HCT116 (cell line): ENCODE measurements at regions of chr7 and their contacts with region 1.

Region 1: GRCh38 chr7:64794171-64794844 is at the start of gene ZNF138:
- DNase-seq: peak; percentile 92
- ATAC-seq: peak; percentile 100
- H3K4me3 ChIP-seq: peak within 1 kb of the TSS; percentile 77 to 95
- H3K27ac ChIP-seq: peak within 1 kb of the TSS; percentile 70
- H3K4me1 ChIP-seq: peaks cover 5 to 14% of the 10 kb centered on the region in 2 experiments; a peak in 3 of 4 replicates
- H3K27me3 ChIP-seq: no peaks in the 10 kb centered on the region
- CTCF ChIP-seq: no peak
- POLR2A ChIP-seq: peak; percentile 71
- RAD21 ChIP-seq: no peak
- total RNA-seq, gene ZNF138: 10.1 TPM

Region 2: GRCh38 chr7:64562626-64563275 is 231.6 kb before region 1 on chr7 and contains the start of gene ZNF680:
- CTCF ChIA-PET with region 1: no interaction called
- POLR2A ChIA-PET with region 1: no interaction called
- RAD21 ChIA-PET with region 1: no interaction called
- intact Hi-C with region 1: loop called (anchors 10 kb)
- DNase-seq: peak; percentile 91
- ATAC-seq: peak; percentile 99
- H3K4me3 ChIP-seq: peak within 1 kb of the TSS; percentile 91 to 93
- H3K27ac ChIP-seq: peak within 1 kb of the TSS; percentile 75
- H3K4me1 ChIP-seq: peaks cover 0 to 5% of the 10 kb centered on the region in 2 experiments; a peak in 1 of 4 replicates
- H3K27me3 ChIP-seq: no peaks in the 10 kb centered on the region
- CTCF ChIP-seq: no peak
- POLR2A ChIP-seq: peak; percentile 78
- RAD21 ChIP-seq: no peak
- total RNA-seq, gene ZNF680: 11.2 TPM

Region 3: GRCh38 chr7:65216459-65216858 is 422.2 kb after region 1 on chr7:
- CTCF ChIA-PET with region 1: no interaction called
- POLR2A ChIA-PET with region 1: no interaction called
- RAD21 ChIA-PET with region 1: no interaction called
- intact Hi-C with region 1: no loop called
- DNase-seq: peak; percentile 48
- ATAC-seq: peak; percentile 94
- H3K4me3 ChIP-seq: no peak overlapping the region
- H3K27ac ChIP-seq: no peak overlapping the region
- H3K4me1 ChIP-seq: no peaks in the 10 kb centered on the region
- H3K27me3 ChIP-seq: no peaks in the 10 kb centered on the region
- CTCF ChIP-seq: peak; percentile 68 to 78 (median 71)
- POLR2A ChIP-seq: no peak
- RAD21 ChIP-seq: peak; percentile 88